ENCODE measurements at regions of chr1 and their contacts with region 1.

Region 1: GRCh38 chr1:52552505-52553361 is at the start of gene TUT4:
- DNase-seq: peak; percentile 57 to 77 (median 73)
- ATAC-seq: peak; percentile 57
- H3K4me3 ChIP-seq: peak within 1 kb of the TSS; percentile 95
- H3K4me3 Mint-ChIP-seq: peak within 1 kb of the TSS in 8 of 10 donors; percentile 67 to 88 (median 75)
- H3K27ac ChIP-seq: peak within 1 kb of the TSS; percentile 91
- H3K27ac Mint-ChIP-seq: peak within 1 kb of the TSS in 7 of 9 donors; percentile 55 to 94 (median 87)
- H3K4me1 ChIP-seq: peaks cover 0 to 40% of the 10 kb centered on the region in 2 donors
- H3K4me1 Mint-ChIP-seq: peaks cover 23 to 52% (median 43%) of the 10 kb centered on the region in 7 donors
- H3K27me3 ChIP-seq: no peaks in the 10 kb centered on the region
- H3K27me3 Mint-ChIP-seq: peaks cover 0 to 7% (median 0%) of the 10 kb centered on the region in 5 donors
- total RNA-seq, gene TUT4: 80.4 to 169 (median 139) TPM

Region 2: DNA sequence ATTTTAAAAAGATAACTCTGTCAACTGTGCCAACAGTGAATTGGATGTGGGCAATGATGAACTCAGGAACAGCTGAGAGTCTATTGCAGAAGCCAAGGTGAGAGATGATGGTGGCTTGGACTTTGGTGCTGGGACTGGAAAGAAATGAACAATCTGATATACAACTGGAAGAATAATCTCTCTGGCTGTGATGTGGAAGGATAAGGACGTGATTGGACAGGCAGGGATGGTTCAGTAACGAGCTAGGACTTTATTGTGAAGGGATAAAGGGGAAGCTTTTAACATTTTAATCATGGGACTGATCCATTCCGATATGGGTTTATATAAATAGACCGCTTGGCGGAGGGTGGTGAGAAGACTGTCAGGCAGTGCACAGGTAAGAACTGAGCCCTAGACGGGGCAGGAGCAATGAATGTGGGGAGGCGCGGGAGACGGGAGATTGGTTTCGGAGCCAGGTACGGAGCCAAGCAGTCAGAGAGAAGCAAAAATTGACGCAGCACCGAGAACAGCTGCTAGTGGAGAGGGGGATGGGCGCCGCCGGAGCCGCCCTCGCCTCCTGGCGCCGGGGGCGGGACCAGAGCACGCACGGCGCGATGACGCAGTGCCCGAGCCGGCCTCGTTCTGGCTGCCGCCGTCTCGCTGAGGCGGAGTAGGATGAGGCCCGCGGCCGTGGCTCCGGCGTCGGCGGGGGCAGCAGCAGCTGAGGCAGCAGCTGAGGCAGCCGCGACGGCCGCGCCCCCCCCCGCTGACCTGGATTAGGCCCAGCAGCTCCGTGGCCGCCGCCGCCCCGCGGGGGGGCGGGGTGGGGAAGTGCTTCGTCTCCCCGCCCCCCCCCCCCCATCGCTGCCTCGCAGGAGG is 1316.8 kb before region 1 on chr1 and contains the start of gene RNF11:
- CTCF ChIA-PET with region 1: no interaction called
- POLR2A ChIA-PET with region 1: no interaction called
- intact Hi-C with region 1: loop called in 1 of 2 experiments (anchors 2 kb)
- DNase-seq: peak; percentile 89 to 97 (median 93)
- ATAC-seq: peak; percentile 98
- H3K4me3 ChIP-seq: peak within 1 kb of the TSS; percentile 68
- H3K4me3 Mint-ChIP-seq: peak within 1 kb of the TSS in 9 of 10 donors; percentile 90 to 99 (median 94)
- H3K27ac ChIP-seq: peak within 1 kb of the TSS; percentile 90
- H3K27ac Mint-ChIP-seq: peak within 1 kb of the TSS; percentile 91 to 100 (median 96)
- H3K4me1 ChIP-seq: peaks cover 18 to 34% of the 10 kb centered on the region in 2 donors
- H3K4me1 Mint-ChIP-seq: peaks cover 15 to 36% (median 30%) of the 10 kb centered on the region in 7 donors
- H3K27me3 ChIP-seq: no peaks in the 10 kb centered on the region
- H3K27me3 Mint-ChIP-seq: peaks cover 0 to 4% (median 0%) of the 10 kb centered on the region in 5 donors
- total RNA-seq, gene RNF11: 23.3 to 64.0 (median 42.9) TPM

Region 3: GRCh38 chr1:52404116-52404986 is 148.4 kb before region 1 on chr1 and contains the starts of genes ORC1 and PRPF38A:
- CTCF ChIA-PET with region 1: interaction called, 3 read pairs
- POLR2A ChIA-PET with region 1: interaction called, 7 read pairs
- intact Hi-C with region 1: loop called (anchors 1 kb)
- DNase-seq: peak; percentile 89 to 97 (median 96)
- ATAC-seq: peak; percentile 99
- H3K4me3 ChIP-seq: peak within 1 kb of the TSS; percentile 83
- H3K4me3 Mint-ChIP-seq: peak within 1 kb of the TSS; percentile 96 to 100 (median 99)
- H3K27ac ChIP-seq: peak within 1 kb of the TSS; percentile 92
- H3K27ac Mint-ChIP-seq: peak within 1 kb of the TSS; percentile 95 to 100 (median 98)
- H3K4me1 ChIP-seq: peaks cover 10 to 16% of the 10 kb centered on the region in 2 donors
- H3K4me1 Mint-ChIP-seq: peaks cover 11 to 66% (median 47%) of the 10 kb centered on the region in 7 donors
- H3K27me3 ChIP-seq: no peaks in the 10 kb centered on the region
- H3K27me3 Mint-ChIP-seq: no peaks in the 10 kb centered on the region
- total RNA-seq, gene ORC1: 0.97 to 25.2 (median 1.3) TPM
- total RNA-seq, gene PRPF38A: 62.1 to 98.7 (median 81.6) TPM

Region 4: GRCh38 chr1:52482326-52483004 is 70.3 kb before region 1 on chr1:
- CTCF ChIA-PET with region 1: no interaction called
- POLR2A ChIA-PET with region 1: no interaction called
- intact Hi-C with region 1: no loop called
- DNase-seq: no peak
- ATAC-seq: no peak
- H3K4me3 ChIP-seq: no peak overlapping the region
- H3K4me3 Mint-ChIP-seq: no peak overlapping the region
- H3K27ac ChIP-seq: no peak overlapping the region
- H3K27ac Mint-ChIP-seq: peak overlapping the region in 1 of 9 donors; percentile 29
- H3K4me1 ChIP-seq: no peaks in the 10 kb centered on the region
- H3K4me1 Mint-ChIP-seq: no peaks in the 10 kb centered on the region
- H3K27me3 ChIP-seq: no peaks in the 10 kb centered on the region
- H3K27me3 Mint-ChIP-seq: no peaks in the 10 kb centered on the region

Region 5: GRCh38 chr1:52531249-52531872 is 21.4 kb before region 1 on chr1:
- CTCF ChIA-PET with region 1: no interaction called
- POLR2A ChIA-PET with region 1: interaction called, 3 read pairs
- intact Hi-C with region 1: loop called in 1 of 2 experiments (anchors 2 kb)
- DNase-seq: no peak
- ATAC-seq: no peak
- H3K4me3 ChIP-seq: no peak overlapping the region
- H3K4me3 Mint-ChIP-seq: peak overlapping the region in 1 of 10 donors; percentile 38
- H3K27ac ChIP-seq: no peak overlapping the region
- H3K27ac Mint-ChIP-seq: peak overlapping the region in 4 of 9 donors; percentile 54 to 84 (median 70)
- H3K4me1 ChIP-seq: peaks cover 4 to 17% of the 10 kb centered on the region in 2 donors
- H3K4me1 Mint-ChIP-seq: peaks cover 15 to 64% (median 51%) of the 10 kb centered on the region in 7 donors
- H3K27me3 ChIP-seq: no peaks in the 10 kb centered on the region
- H3K27me3 Mint-ChIP-seq: no peaks in the 10 kb centered on the region

Region 6: DNA sequence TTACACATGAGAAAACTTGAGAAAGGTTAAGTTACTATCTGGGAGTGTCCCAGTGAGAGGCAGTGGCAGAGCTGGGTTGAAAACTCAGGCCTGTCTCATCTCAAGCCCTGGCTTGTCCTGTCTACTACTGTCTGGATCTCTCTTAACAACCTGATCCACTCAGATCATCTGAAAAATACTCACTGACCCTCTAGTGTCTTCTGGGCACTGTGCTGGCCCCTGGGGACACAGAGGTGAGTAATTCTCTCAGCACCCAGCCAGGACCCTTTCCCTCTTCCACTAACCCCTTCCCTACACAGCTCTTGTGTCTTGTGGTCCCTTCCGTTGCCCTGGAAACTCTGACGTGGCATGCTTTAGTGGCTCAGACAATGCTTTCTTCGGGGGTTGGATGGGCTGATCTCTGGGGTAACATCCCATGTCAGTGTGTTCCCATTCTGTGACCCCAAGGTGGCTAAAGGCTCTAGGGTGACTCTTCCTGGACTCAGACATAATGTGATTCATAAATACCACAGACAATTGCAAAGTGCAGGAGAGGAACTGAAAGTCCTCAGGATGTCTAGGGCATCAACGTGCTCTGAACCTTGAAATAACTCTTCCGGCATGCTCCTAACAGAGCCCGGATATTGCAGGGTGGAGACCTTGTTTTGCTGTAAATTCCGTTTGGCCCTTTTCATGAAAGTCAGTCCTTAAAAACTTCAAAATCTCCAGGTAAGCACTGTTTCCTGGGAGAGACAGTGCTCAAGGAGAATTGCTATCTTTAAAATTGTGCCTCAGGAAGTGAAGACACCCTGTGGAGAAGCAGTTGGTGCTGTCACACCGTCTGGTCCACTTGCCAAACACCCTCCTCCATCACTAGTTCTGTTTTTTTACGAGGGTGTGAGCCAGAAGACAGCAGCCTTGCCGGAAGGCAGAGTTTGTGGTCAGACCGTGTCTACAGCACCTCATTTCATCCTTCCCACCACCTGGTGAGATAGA is 84.3 kb after region 1 on chr1:
- CTCF ChIA-PET with region 1: no interaction called
- POLR2A ChIA-PET with region 1: interaction called, 59 read pairs
- intact Hi-C with region 1: loop called (anchors 1 kb)
- DNase-seq: peak; percentile 39 to 88 (median 83)
- ATAC-seq: peak; percentile 79
- H3K4me3 ChIP-seq: peak overlapping the region; percentile 19
- H3K4me3 Mint-ChIP-seq: peak overlapping the region; percentile 78 to 94 (median 86)
- H3K27ac ChIP-seq: peak overlapping the region; percentile 95
- H3K27ac Mint-ChIP-seq: peak overlapping the region; percentile 96 to 100 (median 99)
- H3K4me1 ChIP-seq: peaks cover 63 to 82% of the 10 kb centered on the region in 2 donors
- H3K4me1 Mint-ChIP-seq: peaks cover 52 to 85% (median 79%) of the 10 kb centered on the region in 7 donors
- H3K27me3 ChIP-seq: no peaks in the 10 kb centered on the region
- H3K27me3 Mint-ChIP-seq: peaks cover 0 to 11% (median 0%) of the 10 kb centered on the region in 5 donors

Region 7: DNA sequence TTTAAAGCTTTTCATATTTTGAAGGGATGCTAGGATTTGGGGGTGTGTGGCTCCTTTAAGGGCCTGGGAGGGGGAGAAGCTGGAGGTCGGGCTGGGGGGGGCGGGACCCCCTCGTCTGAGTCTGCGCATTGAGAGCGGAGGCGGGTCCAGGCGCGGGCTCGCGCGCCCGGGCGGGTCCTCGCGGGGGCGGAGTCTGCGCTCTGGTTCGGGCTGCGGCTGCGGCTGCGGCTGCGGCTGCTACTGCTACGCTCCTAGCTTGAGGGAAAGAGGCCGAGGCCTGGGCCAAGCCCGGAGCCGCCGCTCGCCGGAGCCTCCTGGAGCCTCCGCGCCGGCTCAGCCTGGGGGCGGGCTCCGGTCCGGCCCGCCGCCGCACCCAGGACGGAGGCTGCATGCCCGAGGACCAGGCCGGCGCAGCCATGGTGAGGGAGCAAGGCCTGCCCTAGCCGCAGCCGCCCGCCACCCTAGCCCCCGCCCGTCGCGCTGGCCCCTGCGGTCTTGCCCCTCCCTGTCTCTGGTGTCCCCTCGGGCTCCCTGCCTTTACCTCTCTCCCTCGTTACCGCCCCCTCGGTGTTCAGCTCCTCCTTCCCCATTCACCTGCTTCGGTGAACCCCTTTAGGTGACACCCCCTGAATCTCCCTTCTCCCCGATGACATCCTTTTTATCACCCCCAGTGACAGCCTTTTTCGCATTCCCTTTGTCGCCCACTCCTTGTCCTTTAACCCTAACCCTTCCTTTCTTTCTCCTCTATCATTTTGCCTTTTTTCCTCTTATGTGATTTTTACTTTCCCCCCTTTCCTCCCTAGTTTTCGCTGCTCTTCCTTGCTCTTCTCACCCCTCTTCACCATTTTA is 173.8 kb after region 1 on chr1 and contains the start of gene ZYG11B:
- CTCF ChIA-PET with region 1: no interaction called
- POLR2A ChIA-PET with region 1: no interaction called
- intact Hi-C with region 1: loop called (anchors 1 kb)
- DNase-seq: peak; percentile 80 to 93 (median 88)
- ATAC-seq: peak; percentile 97
- H3K4me3 ChIP-seq: peak within 1 kb of the TSS; percentile 85
- H3K4me3 Mint-ChIP-seq: peak within 1 kb of the TSS; percentile 88 to 99 (median 97)
- H3K27ac ChIP-seq: peak within 1 kb of the TSS; percentile 89
- H3K27ac Mint-ChIP-seq: peak within 1 kb of the TSS; percentile 72 to 97 (median 90)
- H3K4me1 ChIP-seq: peaks cover 12 to 19% of the 10 kb centered on the region in 2 donors
- H3K4me1 Mint-ChIP-seq: peaks cover 24 to 60% (median 54%) of the 10 kb centered on the region in 7 donors
- H3K27me3 ChIP-seq: no peaks in the 10 kb centered on the region
- H3K27me3 Mint-ChIP-seq: peaks cover 0 to 6% (median 0%) of the 10 kb centered on the region in 5 donors
- total RNA-seq, gene ZYG11B: 14.9 to 26.8 (median 17.9) TPM

Region 8: DNA sequence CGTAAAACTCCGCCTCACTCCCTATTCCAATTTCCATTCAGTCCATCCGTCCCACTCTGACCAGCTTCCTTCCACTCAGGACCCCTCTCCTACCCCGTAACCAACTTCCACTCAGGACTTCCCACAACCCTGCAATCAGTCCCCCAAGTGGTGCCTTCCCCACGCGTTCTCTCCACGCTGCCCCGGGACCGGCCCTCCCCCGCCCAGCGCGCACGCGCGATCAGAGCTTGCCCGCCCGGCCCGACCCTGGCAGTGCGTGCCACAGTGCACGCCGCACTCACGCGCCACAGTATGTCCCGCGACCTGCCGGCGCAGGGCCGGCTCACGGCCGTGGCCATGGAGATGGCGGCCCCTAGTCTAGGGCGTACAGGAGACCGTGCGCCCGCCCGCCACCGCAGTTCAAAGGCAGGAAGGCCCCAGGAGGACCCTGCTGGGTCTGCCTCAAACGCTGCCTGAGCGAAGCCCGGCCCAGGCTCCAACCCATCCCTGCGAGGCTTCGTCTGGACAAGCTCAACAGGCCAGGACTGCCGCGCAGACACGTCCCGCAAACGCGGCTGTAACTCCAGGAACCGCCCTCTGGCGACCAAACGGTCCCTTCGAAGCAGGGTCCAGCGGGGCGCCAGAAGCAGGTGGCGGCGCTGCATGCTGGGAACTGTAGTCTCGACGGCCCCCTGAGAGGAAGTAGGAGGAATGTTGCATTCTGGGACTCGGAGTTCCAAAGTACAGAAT is 1285.4 kb after region 1 on chr1 and contains the start of gene NDC1:
- CTCF ChIA-PET with region 1: no interaction called
- POLR2A ChIA-PET with region 1: no interaction called
- intact Hi-C with region 1: loop called in 1 of 2 experiments (anchors 5 kb)
- DNase-seq: peak; percentile 84 to 95 (median 92)
- ATAC-seq: peak; percentile 95
- H3K4me3 ChIP-seq: peak within 1 kb of the TSS; percentile 92
- H3K4me3 Mint-ChIP-seq: peak within 1 kb of the TSS; percentile 96 to 100 (median 99)
- H3K27ac ChIP-seq: peak within 1 kb of the TSS; percentile 95
- H3K27ac Mint-ChIP-seq: peak within 1 kb of the TSS; percentile 96 to 99 (median 98)
- H3K4me1 ChIP-seq: no peaks in the 10 kb centered on the region
- H3K4me1 Mint-ChIP-seq: peaks cover 10 to 41% (median 30%) of the 10 kb centered on the region in 7 donors
- H3K27me3 ChIP-seq: no peaks in the 10 kb centered on the region
- H3K27me3 Mint-ChIP-seq: no peaks in the 10 kb centered on the region
- total RNA-seq, gene NDC1: 6.9 to 20.2 (median 13.2) TPM

Measured in naive thymus-derived CD4-positive, alpha-beta T cell (primary cell).